Endothelial cell of umbilical vein (primary cell): ENCODE measurements at regions of chr15 and their contacts with region 1.

Region 1: DNA sequence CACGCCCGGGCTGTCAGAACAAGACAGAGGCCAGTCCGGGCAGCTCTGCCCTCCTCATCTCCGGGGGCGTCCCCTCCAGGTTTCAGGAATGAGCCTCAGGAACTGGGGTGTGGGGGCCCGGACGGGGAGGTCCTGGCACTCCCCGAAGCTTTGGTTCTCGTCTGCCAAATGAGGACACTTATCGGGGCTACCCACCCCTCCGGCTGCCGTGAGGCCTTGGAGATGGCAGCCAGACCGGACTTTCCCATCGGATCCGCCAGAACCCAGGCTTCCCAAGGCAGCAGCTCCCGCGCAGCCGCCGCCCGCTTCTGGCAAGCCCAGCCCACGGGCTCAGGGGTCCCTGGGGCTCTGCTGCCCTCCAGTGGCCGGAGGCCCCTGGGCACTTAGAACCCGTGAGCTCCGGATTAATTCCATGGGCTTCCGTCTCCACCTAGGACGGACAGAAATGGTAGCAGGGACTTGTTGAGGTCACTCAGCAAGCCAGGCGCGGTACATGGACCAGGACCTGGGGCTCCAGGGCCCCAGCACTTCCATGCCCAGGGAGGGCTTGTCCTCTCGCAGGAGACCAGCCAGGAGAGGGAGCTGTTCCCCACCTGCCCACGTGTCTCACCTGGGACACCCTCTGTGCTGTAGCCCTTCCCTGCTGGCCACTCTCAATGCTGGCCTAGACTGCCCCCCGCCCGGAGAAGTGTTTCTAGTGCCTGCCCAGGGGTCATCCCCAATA is 89.4 kb downstream of the LINGO1 start:
- DNase-seq: peak; percentile 80
- H3K4me3 ChIP-seq: peak overlapping the region in 2 of 3 experiments; percentile 24 to 25
- H3K27ac ChIP-seq: peak overlapping the region; percentile 39
- H3K4me1 ChIP-seq: peaks cover 12% of the 10 kb centered on the region
- H3K27me3 ChIP-seq: no peaks in the 10 kb centered on the region
- CTCF ChIP-seq: peak; percentile 97 to 98
- POLR2A ChIP-seq: no peak

Region 2: DNA sequence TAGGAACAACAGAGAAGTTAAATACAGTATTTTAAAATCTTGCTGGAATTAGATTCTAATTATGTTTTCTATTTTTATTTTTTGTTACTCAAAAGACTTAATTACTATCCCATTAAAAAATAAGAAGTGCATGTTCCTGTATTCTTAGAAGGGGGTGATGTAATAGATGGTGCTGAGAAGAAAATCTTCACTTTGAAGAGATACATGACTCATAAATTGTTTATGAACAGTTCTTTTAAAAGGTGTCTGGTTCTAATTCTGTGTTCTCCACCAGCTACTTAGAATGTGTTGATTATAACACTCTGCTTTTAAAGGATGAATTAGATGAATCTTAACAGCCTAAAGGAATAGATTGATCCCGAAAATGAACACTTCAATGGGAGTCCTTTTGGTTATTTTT is 603.6 kb before region 1 on chr15:
- CTCF ChIA-PET with region 1: interaction called, 15 read pairs
- POLR2A ChIA-PET with region 1: no interaction called
- dilution Hi-C with region 1: no loop called
- intact Hi-C with region 1: no loop called
- DNase-seq: no peak
- H3K4me3 ChIP-seq: no peak overlapping the region
- H3K27ac ChIP-seq: no peak overlapping the region
- H3K4me1 ChIP-seq: no peaks in the 10 kb centered on the region
- H3K27me3 ChIP-seq: no peaks in the 10 kb centered on the region
- CTCF ChIP-seq: no peak
- POLR2A ChIP-seq: no peak

Region 3: DNA sequence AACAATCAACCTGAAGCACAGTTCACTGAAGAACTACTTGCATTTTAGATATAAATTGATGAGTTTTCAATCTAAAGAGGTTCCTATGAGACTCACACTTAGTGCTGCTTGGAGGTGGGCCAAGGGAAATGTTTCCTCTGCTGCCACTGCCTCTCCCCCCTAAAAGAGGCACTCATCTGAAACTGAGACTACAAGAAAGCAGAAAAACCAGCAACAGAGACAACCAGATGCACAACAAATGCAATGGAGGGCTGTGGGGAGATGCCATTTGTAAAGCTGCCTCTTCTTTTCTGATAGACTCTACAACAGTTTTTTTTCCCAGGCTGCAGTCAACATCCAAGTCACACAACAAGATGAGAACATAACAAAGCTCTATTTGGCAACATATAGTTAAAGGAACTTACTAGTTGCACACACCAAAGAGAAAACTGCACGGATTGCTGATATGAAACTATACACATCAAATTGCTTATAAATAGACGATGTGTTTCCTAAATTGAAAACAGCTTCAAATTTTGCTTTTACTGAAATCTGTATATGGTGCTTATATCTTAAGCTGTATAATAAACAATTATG is 483.4 kb before region 1 on chr15:
- CTCF ChIA-PET with region 1: interaction called, 13 read pairs
- POLR2A ChIA-PET with region 1: no interaction called
- dilution Hi-C with region 1: no loop called
- intact Hi-C with region 1: no loop called
- DNase-seq: peak; percentile 61
- H3K4me3 ChIP-seq: no peak overlapping the region
- H3K27ac ChIP-seq: no peak overlapping the region
- H3K4me1 ChIP-seq: peaks cover 21% of the 10 kb centered on the region
- H3K27me3 ChIP-seq: no peaks in the 10 kb centered on the region
- CTCF ChIP-seq: no peak
- POLR2A ChIP-seq: no peak

Region 4: GRCh38 chr15:77118882-77119321 is 424.4 kb before region 1 on chr15:
- CTCF ChIA-PET with region 1: interaction called, 187 read pairs
- POLR2A ChIA-PET with region 1: no interaction called
- dilution Hi-C with region 1: no loop called
- intact Hi-C with region 1: loop called (anchors 1 kb)
- DNase-seq: peak; percentile 80
- H3K4me3 ChIP-seq: no peak overlapping the region
- H3K27ac ChIP-seq: peak overlapping the region; percentile 8
- H3K4me1 ChIP-seq: peaks cover 14% of the 10 kb centered on the region
- H3K27me3 ChIP-seq: no peaks in the 10 kb centered on the region
- CTCF ChIP-seq: peak; percentile 57 to 63
- POLR2A ChIP-seq: no peak

Region 5: DNA sequence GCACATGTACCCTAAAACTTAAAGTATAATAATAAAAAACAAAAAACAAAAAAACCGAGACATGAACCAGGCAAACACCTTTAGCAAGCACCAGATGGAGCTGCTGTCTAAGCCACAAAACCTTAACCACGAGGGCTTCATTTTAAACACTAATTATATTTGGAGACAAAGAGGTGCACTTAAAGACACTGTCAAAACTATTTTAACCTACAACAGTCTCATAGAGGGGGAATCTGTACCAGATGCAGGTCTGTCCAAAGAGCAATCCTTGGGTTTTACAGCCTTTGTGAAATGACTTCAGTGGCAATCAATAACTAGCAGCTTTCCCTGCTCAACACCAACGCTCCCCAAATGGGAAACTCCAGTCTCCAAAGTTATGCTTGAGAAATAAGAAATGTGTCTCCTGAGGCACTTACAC is 356.7 kb before region 1 on chr15:
- CTCF ChIA-PET with region 1: interaction called, 256 read pairs
- POLR2A ChIA-PET with region 1: interaction called, 3 read pairs
- dilution Hi-C with region 1: no loop called
- intact Hi-C with region 1: loop called (anchors 1 kb)
- DNase-seq: peak; percentile 66
- H3K4me3 ChIP-seq: no peak overlapping the region
- H3K27ac ChIP-seq: peak overlapping the region; percentile 92
- H3K4me1 ChIP-seq: peaks cover 33% of the 10 kb centered on the region
- H3K27me3 ChIP-seq: no peaks in the 10 kb centered on the region
- CTCF ChIP-seq: peak; percentile 30 to 56
- POLR2A ChIP-seq: no peak

Region 6: DNA sequence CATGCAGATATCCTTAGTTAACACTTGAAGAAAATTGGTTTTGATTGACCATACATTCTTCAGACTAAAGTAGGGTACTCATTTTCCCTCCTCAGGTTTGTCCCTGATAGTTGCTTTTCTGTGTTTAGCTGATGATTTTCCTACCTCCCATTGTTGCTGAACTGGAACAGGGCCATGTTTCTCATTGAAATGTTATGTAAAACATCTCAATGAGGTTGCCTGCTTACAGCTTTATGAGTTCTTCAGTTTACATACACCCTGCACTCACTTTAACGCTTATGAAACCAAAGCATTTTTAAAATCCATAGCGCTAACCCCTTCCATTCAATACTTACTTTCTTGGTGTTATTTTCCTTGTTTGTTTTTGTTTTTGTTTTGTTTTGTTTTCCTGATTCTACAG is 60.8 kb before region 1 on chr15:
- CTCF ChIA-PET with region 1: interaction called, 17 read pairs
- POLR2A ChIA-PET with region 1: no interaction called
- dilution Hi-C with region 1: no loop called
- intact Hi-C with region 1: no loop called
- DNase-seq: peak; percentile 87
- H3K4me3 ChIP-seq: no peak overlapping the region
- H3K27ac ChIP-seq: peak overlapping the region; percentile 76
- H3K4me1 ChIP-seq: peaks cover 67% of the 10 kb centered on the region
- H3K27me3 ChIP-seq: no peaks in the 10 kb centered on the region
- CTCF ChIP-seq: no peak
- POLR2A ChIP-seq: no peak

Region 7: DNA sequence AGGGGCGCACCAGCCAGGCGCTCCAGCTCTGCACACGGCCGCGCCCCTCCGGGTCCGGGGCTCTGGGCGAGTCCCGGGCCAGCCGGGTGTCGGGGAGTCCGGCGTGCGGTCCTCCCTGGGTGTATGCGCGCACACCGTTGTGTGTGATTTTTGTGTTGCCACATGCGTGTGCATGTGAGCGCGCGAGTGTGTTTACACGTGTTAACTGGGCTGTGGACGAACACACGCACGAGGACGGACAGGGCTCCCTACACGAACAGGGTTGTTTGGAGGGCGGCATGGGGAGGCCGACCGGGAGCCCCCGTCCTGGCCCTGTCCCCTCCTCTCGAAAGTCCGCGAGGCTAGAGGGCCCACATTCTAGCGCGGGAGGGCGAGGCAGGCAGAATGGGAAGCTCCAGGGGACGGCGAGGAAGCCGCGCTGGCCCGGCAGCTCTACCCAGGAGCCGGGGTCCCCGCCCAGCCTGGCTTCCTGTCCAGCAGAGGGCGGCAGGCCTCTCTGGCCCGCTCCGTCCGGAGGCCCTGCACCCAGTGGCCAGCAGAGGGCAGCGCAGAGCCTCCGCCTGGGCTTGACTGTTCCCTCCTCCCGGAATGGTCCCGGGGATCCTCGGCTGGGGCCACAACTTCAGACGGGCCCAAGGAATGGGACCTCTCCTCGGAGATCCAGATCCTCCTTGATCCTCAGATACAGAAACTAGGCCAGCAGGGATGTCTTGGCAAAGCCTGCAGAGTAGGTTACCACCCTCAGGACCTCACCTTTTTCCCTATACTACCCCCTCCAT is 90.0 kb after region 1 on chr15:
- CTCF ChIA-PET with region 1: interaction called, 14 read pairs
- POLR2A ChIA-PET with region 1: no interaction called
- dilution Hi-C with region 1: no loop called
- intact Hi-C with region 1: no loop called
- DNase-seq: peak; percentile 76
- H3K4me3 ChIP-seq: peak overlapping the region in 2 of 3 experiments; percentile 9 to 37
- H3K27ac ChIP-seq: no peak overlapping the region
- H3K4me1 ChIP-seq: peaks cover 3% of the 10 kb centered on the region
- H3K27me3 ChIP-seq: peaks cover 39 to 45% of the 10 kb centered on the region in 2 experiments
- CTCF ChIP-seq: peak; percentile 100
- POLR2A ChIP-seq: no peak

Region 8: GRCh38 chr15:77747175-77748077 is 204.1 kb after region 1 on chr15:
- CTCF ChIA-PET with region 1: no interaction called
- POLR2A ChIA-PET with region 1: no interaction called
- dilution Hi-C with region 1: no loop called
- intact Hi-C with region 1: no loop called
- DNase-seq: no peak
- H3K4me3 ChIP-seq: no peak overlapping the region
- H3K27ac ChIP-seq: no peak overlapping the region
- H3K4me1 ChIP-seq: no peaks in the 10 kb centered on the region
- H3K27me3 ChIP-seq: no peaks in the 10 kb centered on the region
- CTCF ChIP-seq: no peak
- POLR2A ChIP-seq: no peak